ENCODE measurements at regions of chr20 and their contacts with region 1.

Region 1: DNA sequence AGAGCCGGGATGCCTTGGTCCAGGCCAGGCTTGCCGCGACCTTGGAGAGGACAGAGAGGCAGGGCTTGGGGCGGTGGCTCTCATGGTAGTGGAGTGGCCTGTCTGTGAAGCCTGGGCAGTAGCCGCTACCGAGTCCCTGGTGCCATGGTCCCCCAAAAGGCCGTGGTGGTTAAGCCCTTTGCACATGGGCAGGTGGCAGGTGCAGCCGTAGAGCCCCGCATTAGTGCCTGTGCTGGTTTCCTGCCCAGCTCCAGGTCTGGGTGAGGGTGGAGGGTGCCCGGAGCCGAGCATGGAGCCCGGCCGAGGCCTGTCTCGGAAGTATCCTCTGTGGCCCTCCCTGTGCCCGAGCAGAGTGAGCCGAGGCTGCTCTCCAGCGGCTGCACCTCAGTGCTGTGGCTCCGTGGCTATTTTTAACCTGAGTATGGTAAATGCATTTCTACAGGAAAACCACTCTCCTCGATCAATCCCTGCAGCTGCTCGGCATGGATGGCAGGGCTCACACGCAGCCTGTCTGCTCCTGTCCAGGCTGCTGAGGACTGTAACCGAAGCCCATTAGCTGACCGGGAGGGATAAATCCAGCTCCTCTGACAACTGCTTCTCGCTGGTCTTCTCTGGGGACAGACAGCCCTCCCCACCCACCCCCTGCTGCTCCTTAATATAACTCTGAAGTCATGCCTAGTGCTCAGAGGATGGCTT is 36.3 kb upstream of the GATA5 start:
- DNase-seq: no peak
- H3K4me3 ChIP-seq: no peak overlapping the region
- H3K27ac ChIP-seq: no peak overlapping the region
- H3K4me1 ChIP-seq: no peaks in the 10 kb centered on the region
- H3K27me3 ChIP-seq: no peaks in the 10 kb centered on the region
- CTCF ChIP-seq: no peak
- EP300 ChIP-seq: no peak
- POLR2A ChIP-seq: no peak

Region 2: GRCh38 chr20:62603021-62603906 is 91.2 kb after region 1 on chr20:
- intact Hi-C with region 1: loop called in 1 of 4 experiments (anchors 5 kb)
- DNase-seq: peak in 1 of 5 donors; percentile 28
- H3K4me3 ChIP-seq: no peak overlapping the region
- H3K27ac ChIP-seq: no peak overlapping the region
- H3K4me1 ChIP-seq: peaks cover 4% of the 10 kb centered on the region
- H3K27me3 ChIP-seq: no peaks in the 10 kb centered on the region
- CTCF ChIP-seq: no peak
- EP300 ChIP-seq: no peak
- POLR2A ChIP-seq: no peak